Colonic mucosa (tissue), 4 donors: ENCODE measurements at regions of chr1 and their contacts with region 1.

Region 1: GRCh38 chr1:201376464-201377374 is 761 bp downstream of the TNNT2 start:
- DNase-seq: peak; percentile 42
- H3K4me3 ChIP-seq: no peak overlapping the region
- H3K27ac ChIP-seq: no peak overlapping the region
- H3K4me1 ChIP-seq: no peaks in the 10 kb centered on the region
- H3K27me3 ChIP-seq: peaks cover 8% of the 10 kb centered on the region
- CTCF ChIP-seq: peak; percentile 44

Region 2: GRCh38 chr1:201419746-201420607 is 43.3 kb after region 1 on chr1:
- intact Hi-C with region 1: loop called (anchors 5 kb)
- DNase-seq: no peak
- H3K4me3 ChIP-seq: no peak overlapping the region
- H3K27ac ChIP-seq: no peak overlapping the region
- H3K4me1 ChIP-seq: no peaks in the 10 kb centered on the region
- H3K27me3 ChIP-seq: no peaks in the 10 kb centered on the region
- CTCF ChIP-seq: no peak